Activated CD4-positive, alpha-beta memory T cell treated with anti-CD3 and anti-CD28 coated beads, Interleukin-2, amount 10 ng/mL, durations not matched to agents 7 days and 5 days (primary cell): ENCODE measurements at regions of chr1 and their contacts with region 1.

Region 1: DNA sequence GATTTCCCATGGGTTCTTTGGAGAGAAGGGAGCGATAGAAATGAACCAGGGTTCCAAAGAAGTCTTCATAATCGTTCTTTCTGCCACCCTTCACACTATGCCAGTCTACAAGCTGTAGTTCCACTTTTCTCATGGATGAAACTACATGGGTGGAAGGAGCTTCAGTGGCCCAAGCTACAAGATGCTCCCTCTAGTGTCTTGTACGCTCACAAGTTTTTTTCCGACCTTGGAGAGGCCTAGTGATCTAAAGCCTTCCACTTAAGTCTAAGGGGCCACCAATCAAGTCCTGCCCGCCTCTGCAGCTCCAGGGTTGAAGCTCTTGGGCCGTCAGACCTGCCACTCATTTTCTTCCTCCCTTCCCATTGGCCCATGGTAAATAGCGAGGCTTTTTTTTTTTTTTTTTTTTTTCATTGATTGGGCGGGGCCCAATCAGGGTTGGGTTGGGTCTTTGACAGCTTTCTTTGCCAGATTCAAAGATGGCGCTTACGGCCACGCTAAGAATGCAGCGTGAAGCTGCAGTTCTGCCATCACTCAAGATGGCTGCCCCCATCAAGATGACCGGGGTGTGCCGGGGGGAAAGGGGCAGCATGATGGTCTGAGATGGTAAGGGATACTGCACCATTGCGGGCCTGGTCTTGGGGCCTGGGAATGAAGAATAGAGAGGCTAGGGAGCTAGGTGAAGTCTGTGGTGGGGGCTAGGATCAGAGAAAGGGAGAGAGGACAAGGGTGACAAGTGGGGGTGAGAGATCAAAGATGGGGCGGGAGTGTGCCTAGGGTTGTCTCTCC is at the start of gene TOMM40L:
- DNase-seq: peak; percentile 90
- H3K4me3 Mint-ChIP-seq: peak within 1 kb of the TSS; percentile 100
- H3K27ac Mint-ChIP-seq: peak within 1 kb of the TSS; percentile 94
- H3K4me1 Mint-ChIP-seq: peaks cover 45% of the 10 kb centered on the region
- H3K27me3 Mint-ChIP-seq: no peaks in the 10 kb centered on the region
- total RNA-seq, gene TOMM40L: 17.4 to 18.1 TPM

Region 2: GRCh38 chr1:161185282-161185682 is 40.4 kb before region 1 on chr1:
- CTCF ChIA-PET with region 1: interaction called, 71 read pairs
- POLR2A ChIA-PET with region 1: interaction called, 32 read pairs
- DNase-seq: peak; percentile 88
- H3K4me3 Mint-ChIP-seq: peak overlapping the region; percentile 71
- H3K27ac Mint-ChIP-seq: peak overlapping the region; percentile 93
- H3K4me1 Mint-ChIP-seq: peaks cover 79% of the 10 kb centered on the region
- H3K27me3 Mint-ChIP-seq: no peaks in the 10 kb centered on the region

Region 3: GRCh38 chr1:161201828-161202725 is 23.6 kb before region 1 on chr1 and contains the start of gene NDUFS2:
- CTCF ChIA-PET with region 1: interaction called, 101 read pairs
- POLR2A ChIA-PET with region 1: interaction called, 69 read pairs
- DNase-seq: peak; percentile 97
- H3K4me3 Mint-ChIP-seq: peak within 1 kb of the TSS; percentile 92
- H3K27ac Mint-ChIP-seq: peak within 1 kb of the TSS; percentile 96
- H3K4me1 Mint-ChIP-seq: peaks cover 81% of the 10 kb centered on the region
- H3K27me3 Mint-ChIP-seq: no peaks in the 10 kb centered on the region
- total RNA-seq, gene NDUFS2: 83.0 to 87.3 TPM

Region 4: DNA sequence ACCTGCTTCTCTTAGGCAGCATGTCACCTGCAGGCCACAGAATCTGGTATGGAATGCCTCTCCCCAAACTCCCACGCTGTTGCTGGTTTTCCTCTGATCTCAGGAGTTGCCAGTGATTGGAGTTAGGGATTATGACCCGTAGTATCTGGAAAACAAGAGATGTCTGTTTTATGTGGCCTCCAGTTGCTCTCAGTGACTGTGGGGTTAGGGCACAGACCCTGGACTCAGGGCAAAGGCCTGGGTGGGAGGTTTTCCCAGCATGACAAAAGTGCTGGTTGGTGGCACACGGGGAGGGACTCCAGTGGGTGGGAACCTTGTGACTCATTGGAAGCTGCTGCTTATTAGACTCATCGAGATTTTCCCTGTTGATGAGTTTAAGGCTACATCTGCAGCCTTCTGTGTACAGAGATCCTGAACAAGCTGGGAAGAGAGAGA is 12.3 kb after region 1 on chr1 and contains the start of gene NR1I3:
- CTCF ChIA-PET with region 1: interaction called, 14 read pairs
- POLR2A ChIA-PET with region 1: interaction called, 3 read pairs
- DNase-seq: no peak
- H3K4me3 Mint-ChIP-seq: no peak within 1 kb of the TSS
- H3K27ac Mint-ChIP-seq: no peak within 1 kb of the TSS
- H3K4me1 Mint-ChIP-seq: no peaks in the 10 kb centered on the region
- H3K27me3 Mint-ChIP-seq: peaks cover 12% of the 10 kb centered on the region
- total RNA-seq, gene NR1I3: not detected

Region 5: GRCh38 chr1:161305867-161306519 is 80.3 kb after region 1 on chr1:
- CTCF ChIA-PET with region 1: interaction called, 17 read pairs
- POLR2A ChIA-PET with region 1: interaction called, 3 read pairs
- DNase-seq: peak; percentile 89
- H3K4me3 Mint-ChIP-seq: peak overlapping the region; percentile 89
- H3K27ac Mint-ChIP-seq: peak overlapping the region; percentile 70
- H3K4me1 Mint-ChIP-seq: peaks cover 37% of the 10 kb centered on the region
- H3K27me3 Mint-ChIP-seq: peaks cover 3% of the 10 kb centered on the region

Region 6: DNA sequence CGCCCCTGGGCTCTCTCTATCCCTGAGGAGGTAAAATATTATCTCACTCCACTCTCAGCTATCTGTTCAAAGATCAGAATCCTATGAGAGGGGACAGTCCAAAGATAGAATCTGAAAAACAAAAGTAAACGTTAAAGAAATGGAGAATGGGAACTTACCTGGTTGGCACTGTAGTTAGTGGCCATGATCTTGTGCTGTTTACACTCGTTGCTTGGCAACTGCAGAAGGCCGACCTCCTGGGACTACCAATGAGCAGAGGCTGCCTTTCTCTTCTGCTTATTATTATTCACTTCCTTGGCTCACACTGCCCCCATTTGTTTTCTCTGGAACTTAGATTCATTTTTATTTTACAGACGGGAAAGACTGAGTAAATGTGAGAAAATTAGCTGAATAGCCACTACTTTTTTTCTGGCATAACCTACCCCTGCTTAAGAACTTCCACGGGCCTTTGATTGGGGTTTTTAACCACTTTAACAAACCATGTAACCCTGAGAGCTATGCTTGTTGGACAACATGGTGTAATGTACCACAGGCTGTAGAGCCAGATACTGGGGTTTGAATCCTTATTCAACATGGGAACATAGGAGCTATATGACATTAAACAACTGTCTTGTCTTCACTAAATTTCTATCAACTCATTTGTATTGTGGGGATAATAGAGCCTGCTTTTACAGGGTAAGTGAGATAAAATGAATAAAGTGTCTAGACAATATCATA is 142.1 kb after region 1 on chr1 and contains the start of gene CFAP126:
- CTCF ChIA-PET with region 1: interaction called, 10 read pairs
- POLR2A ChIA-PET with region 1: interaction called, 5 read pairs
- DNase-seq: peak; percentile 45
- H3K4me3 Mint-ChIP-seq: no peak within 1 kb of the TSS
- H3K27ac Mint-ChIP-seq: no peak within 1 kb of the TSS
- H3K4me1 Mint-ChIP-seq: peaks cover 14% of the 10 kb centered on the region
- H3K27me3 Mint-ChIP-seq: no peaks in the 10 kb centered on the region
- total RNA-seq, gene CFAP126: not detected

Region 7: GRCh38 chr1:161382214-161383019 is 156.7 kb after region 1 on chr1:
- CTCF ChIA-PET with region 1: interaction called, 193 read pairs
- POLR2A ChIA-PET with region 1: interaction called, 10 read pairs
- DNase-seq: no peak
- H3K4me3 Mint-ChIP-seq: no peak overlapping the region
- H3K27ac Mint-ChIP-seq: no peak overlapping the region
- H3K4me1 Mint-ChIP-seq: peaks cover 18% of the 10 kb centered on the region
- H3K27me3 Mint-ChIP-seq: no peaks in the 10 kb centered on the region